Common myeloid progenitor, CD34-positive (primary cell): ENCODE measurements at regions of chr2 and their contacts with region 1.

Region 1: DNA sequence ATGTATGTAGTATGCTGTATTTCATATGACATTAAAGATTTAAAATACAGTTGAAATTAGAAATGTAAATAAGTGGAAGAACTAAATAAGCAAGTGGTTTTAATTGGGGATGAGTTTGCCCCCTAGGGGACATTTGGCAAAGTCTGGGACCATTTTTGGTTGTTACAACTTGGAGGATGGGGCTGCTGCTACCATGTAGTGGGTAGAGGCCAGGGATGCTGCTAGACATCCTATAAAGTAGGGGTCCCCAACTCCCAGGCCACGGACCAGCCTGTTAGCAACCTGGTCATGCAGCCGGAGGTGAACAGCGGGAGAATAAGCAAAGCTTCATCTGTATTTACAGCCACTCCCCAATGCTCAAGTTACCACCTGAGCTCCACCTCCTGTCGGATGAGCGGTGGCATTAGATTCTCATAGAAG is 27.9 kb upstream of the ASNSD1 start:
- DNase-seq: peak; percentile 52 to 75 (median 70)
- H3K4me3 ChIP-seq: no peak overlapping the region
- H3K27ac ChIP-seq: no peak overlapping the region
- H3K4me1 ChIP-seq: no peaks in the 10 kb centered on the region
- H3K27me3 ChIP-seq: no peaks in the 10 kb centered on the region

Region 2: DNA sequence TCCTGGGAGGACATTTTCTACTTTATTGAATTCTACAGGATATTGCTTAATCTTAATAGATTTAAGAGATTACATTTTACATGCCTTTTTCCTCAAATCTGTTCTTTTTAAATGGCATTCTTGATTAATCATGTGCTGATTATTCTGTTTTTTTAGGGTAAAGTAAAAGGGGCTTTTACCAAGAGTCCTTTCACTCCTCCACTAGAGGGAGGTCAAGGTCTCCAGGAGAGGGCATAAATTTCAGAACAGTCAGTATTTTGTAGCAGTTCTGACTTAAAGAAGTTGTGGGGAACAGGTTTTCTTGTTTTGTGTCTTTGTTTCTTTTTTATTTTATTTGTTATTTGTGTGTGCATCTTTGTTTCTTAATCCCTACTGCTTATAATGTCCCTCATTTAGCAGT is 166.7 kb before region 1 on chr2:
- CTCF ChIA-PET with region 1: interaction called, 128 read pairs
- POLR2A ChIA-PET with region 1: no interaction called
- DNase-seq: peak; percentile 54 to 82 (median 80)
- H3K4me3 ChIP-seq: no peak overlapping the region
- H3K27ac ChIP-seq: no peak overlapping the region
- H3K4me1 ChIP-seq: peaks cover 0 to 5% (median 0%) of the 10 kb centered on the region in 4 experiments
- H3K27me3 ChIP-seq: no peaks in the 10 kb centered on the region

Region 3: GRCh38 chr2:189580658-189581353 is 52.6 kb before region 1 on chr2 and contains the start of gene SLC40A1:
- CTCF ChIA-PET with region 1: interaction called, 20 read pairs
- POLR2A ChIA-PET with region 1: interaction called, 10 read pairs
- DNase-seq: peak; percentile 81 to 92 (median 86)
- H3K4me3 ChIP-seq: peak within 1 kb of the TSS; percentile 66 to 97 (median 86)
- H3K27ac ChIP-seq: peak within 1 kb of the TSS; percentile 84 to 91
- H3K4me1 ChIP-seq: peaks cover 20 to 82% (median 28%) of the 10 kb centered on the region in 4 experiments
- H3K27me3 ChIP-seq: no peaks in the 10 kb centered on the region